ENCODE measurements at regions of chr22 and their contacts with region 1.

Region 1: DNA sequence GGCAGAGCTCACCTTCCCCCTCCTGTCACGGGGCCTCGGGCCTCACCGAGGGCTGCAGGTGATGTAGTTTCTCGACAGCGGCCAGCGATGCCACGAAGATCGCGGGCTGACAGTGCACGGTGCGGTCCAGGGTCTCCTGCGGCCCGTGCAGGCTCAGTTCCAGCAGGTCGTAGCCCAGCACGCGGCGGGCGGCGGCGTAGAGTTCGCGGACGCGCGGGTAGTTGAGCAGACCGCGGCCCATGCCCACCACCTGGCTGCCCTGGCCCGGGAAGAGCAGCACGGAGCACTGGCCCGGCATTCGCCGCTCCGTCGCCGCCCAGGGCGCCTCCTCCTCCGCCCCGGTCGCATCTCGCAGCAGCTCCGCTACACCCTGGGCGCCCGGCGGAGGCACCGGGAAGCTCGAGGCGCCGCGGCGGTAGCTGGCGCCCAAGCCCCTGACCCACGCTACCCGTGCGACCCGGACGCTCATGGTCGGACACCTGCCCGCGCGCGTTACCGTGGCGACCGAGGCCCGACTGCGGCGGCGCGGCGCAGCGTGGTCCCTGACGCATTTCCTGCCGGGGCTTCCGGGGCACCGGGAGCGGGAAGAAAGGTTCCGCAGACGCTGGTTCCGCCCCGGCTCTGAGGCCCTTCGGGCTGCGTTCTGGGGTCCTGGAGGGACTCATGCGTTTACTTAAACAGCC is at the start of gene MCAT:
- DNase-seq: peak; percentile 58 to 93 (median 80)
- H3K4me3 ChIP-seq: peak within 1 kb of the TSS; percentile 63 to 100 (median 97)
- H3K27ac ChIP-seq: peak within 1 kb of the TSS in 53 of 59 donors; percentile 22 to 93 (median 76)
- H3K27me3 ChIP-seq: no peaks in the 10 kb centered on the region
- CTCF ChIP-seq: peak in 32 of 56 donors; percentile 10 to 59 (median 26)
- total RNA-seq, gene MCAT: 10.7 to 29.7 (median 20.7) TPM

Region 2: GRCh38 chr22:43014869-43015676 is 127.9 kb before region 1 on chr22 and contains the start of gene PACSIN2:
- intact Hi-C with region 1: loop called in 1 of 2 experiments (anchors 10 kb)
- DNase-seq: peak; percentile 99 to 100 (median 99)
- H3K4me3 ChIP-seq: peak within 1 kb of the TSS; percentile 41 to 93 (median 75)
- H3K27ac ChIP-seq: peak within 1 kb of the TSS in 28 of 59 donors; percentile 3 to 82 (median 56)
- H3K27me3 ChIP-seq: no peaks in the 10 kb centered on the region
- CTCF ChIP-seq: peak in 14 of 56 donors; percentile 7 to 38 (median 18)
- total RNA-seq, gene PACSIN2: 32.7 to 64.6 (median 48.1) TPM

Region 3: DNA sequence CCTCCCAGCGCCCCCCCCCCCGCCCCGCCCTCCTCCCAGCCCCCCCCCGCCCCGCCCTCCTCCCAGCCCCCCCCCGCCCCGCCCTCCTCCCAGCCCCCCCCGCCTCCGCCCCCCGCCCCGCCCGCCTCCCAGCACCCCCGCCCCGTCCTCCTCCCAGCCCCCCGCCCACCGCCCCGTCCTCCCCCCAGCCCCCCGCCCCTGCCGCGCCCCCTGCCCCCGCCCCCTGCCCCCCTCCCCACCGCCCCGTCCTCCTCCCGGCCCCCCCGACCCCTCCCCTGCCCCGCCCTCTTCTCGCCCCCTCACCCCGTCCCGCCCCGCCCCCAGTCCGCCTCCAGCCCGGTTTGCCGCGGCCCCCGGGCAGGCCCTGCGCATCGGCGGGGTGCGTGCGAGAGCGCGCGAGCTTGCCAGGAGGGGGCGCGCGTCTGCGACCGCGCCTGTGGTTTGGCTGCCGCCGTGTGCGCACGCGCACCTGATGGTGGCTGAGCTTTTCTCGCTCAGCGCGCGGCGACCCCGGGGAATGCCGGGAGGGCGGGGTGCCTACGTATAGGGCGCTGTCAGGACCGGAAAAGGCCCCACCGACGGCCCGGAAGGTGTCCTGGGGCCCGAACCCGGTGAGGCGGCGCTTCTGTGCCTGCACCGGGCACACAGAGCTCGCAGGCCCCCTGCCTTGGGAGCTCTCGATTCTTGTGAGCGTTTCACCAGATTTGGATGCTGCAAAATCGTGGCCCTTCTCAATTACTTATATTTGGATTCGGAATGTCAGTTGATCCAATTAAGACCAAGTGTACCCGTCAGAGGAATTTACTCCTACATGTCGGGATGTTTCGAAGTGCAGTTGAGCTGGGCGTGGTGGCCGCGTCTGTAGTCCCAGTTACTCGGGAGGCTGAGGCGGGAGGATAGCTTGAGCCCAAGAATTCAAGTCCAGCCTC is 44.4 kb after region 1 on chr22:
- intact Hi-C with region 1: loop called (anchors 2 kb)
- DNase-seq: peak; percentile 90 to 96 (median 93)
- H3K4me3 ChIP-seq: peak overlapping the region; percentile 42 to 89 (median 69)
- H3K27ac ChIP-seq: peak overlapping the region; percentile 42 to 96 (median 89)
- H3K27me3 ChIP-seq: no peaks in the 10 kb centered on the region
- CTCF ChIP-seq: peak; percentile 43 to 85 (median 70)

Measured in dorsolateral prefrontal cortex (tissue), 120 donors.